ENCODE measurements at regions of chr21 and their contacts with region 1.

Region 1: GRCh38 chr21:43676391-43676790 is 17.0 kb downstream of the RRP1B start:
- DNase-seq: no peak
- ATAC-seq: no peak
- H3K4me3 ChIP-seq: no peak overlapping the region
- H3K27ac ChIP-seq: no peak overlapping the region
- H3K4me1 ChIP-seq: no peaks in the 10 kb centered on the region
- H3K27me3 ChIP-seq: no peaks in the 10 kb centered on the region

Region 2: GRCh38 chr21:43611598-43612369 is 64.6 kb before region 1 on chr21:
- intact Hi-C with region 1: no loop called
- DNase-seq: peak; percentile 71 to 89 (median 86)
- ATAC-seq: peak; percentile 77 to 89
- H3K4me3 ChIP-seq: no peak overlapping the region
- H3K27ac ChIP-seq: no peak overlapping the region
- H3K4me1 ChIP-seq: peaks cover 5% of the 10 kb centered on the region
- H3K27me3 ChIP-seq: no peaks in the 10 kb centered on the region

Region 3: DNA sequence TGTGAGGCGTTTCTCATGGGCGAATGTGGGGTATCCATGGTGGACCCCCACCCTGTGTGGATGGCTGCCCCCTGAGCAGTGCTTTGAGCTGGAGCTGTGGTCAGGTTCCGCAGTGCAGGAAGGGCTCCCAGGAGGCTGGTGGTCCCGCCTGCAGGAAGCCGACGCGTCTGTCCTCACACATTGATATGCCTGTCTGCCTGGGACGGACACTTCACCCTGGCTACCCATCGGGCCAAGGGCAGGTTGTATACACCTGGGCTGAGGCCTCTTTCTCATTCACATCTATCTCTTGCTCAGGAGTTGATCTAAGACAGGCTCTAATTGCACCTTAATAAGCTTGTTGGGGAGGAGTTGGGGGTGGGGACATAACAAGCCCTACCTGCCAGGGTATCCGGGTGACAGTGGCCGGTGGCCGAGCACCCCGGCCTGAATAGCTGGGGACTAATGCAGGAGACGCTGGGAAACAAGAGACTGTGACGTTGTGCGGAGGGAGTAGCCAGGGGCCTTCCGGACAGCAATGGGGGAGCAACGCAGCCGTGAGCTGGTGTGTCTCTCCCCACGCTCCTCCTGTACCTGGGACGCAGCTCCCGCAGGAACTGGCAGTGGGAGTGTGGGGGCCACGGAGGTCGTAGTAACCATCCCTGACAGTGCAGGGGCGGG is 64.2 kb after region 1 on chr21:
- intact Hi-C with region 1: loop called in 1 of 4 experiments (anchors 10 kb)
- DNase-seq: peak in 1 of 3 donors; percentile 76
- ATAC-seq: peak; percentile 29 to 36
- H3K4me3 ChIP-seq: no peak overlapping the region
- H3K27ac ChIP-seq: no peak overlapping the region
- H3K4me1 ChIP-seq: no peaks in the 10 kb centered on the region
- H3K27me3 ChIP-seq: no peaks in the 10 kb centered on the region

Region 4: DNA sequence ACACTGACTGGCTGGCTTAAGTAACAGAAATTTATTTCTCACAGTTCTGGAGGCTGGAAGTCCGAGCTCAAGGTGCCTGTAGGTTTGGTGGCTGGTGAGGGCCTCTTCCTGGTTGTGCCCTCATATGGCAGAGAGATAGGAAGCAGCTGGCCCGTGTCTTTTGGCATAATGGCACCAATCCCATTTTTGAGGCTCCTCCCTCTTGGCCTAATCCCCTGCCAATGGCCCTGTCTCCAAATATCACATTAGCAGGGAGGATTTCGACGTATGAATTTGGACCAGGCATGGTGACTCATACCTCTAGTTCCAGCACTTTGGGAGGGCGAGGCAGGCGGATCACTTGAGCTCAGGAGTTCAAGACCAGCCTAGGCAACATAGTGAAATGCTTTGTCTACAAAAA is 226.1 kb after region 1 on chr21:
- intact Hi-C with region 1: no loop called
- DNase-seq: peak in 2 of 3 donors; percentile 32 to 57
- ATAC-seq: peak; percentile 20 to 57
- H3K4me3 ChIP-seq: no peak overlapping the region
- H3K27ac ChIP-seq: peak overlapping the region; percentile 53
- H3K4me1 ChIP-seq: peaks cover 9% of the 10 kb centered on the region
- H3K27me3 ChIP-seq: no peaks in the 10 kb centered on the region

Region 5: GRCh38 chr21:44051462-44051941 is 375.1 kb after region 1 on chr21:
- intact Hi-C with region 1: no loop called
- DNase-seq: peak; percentile 67 to 81 (median 80)
- ATAC-seq: peak; percentile 68 to 78
- H3K4me3 ChIP-seq: no peak overlapping the region
- H3K27ac ChIP-seq: peak overlapping the region; percentile 19
- H3K4me1 ChIP-seq: peaks cover 11% of the 10 kb centered on the region
- H3K27me3 ChIP-seq: no peaks in the 10 kb centered on the region

Measured in right cardiac atrium (tissue), 5 donors.